AG04449 (cell line): ENCODE measurements at regions of chr4 and their contacts with region 1.

Region 1: DNA sequence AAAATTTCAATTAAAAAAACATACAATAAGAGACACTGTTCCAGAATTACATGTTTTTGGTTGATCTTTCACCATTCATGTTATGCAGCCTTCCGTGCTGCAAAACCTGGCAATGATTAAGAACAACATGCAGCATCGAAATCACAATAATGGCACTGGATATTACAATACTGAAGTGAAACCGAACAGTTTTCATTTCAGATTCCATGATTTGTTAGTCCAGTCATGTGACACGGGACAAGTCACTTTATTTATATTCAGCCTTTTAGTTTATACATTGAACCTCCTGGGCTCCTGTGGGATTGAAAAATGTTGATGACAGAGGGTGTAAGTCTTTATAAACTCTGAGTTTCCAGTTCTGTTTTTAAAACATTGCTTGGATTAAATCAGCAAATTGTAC is 142.5 kb upstream of the TTC29 start:
- DNase-seq: no peak
- H3K4me3 ChIP-seq: peak overlapping the region; percentile 15; the same call in 1 of the 2 replicates
- CTCF ChIP-seq: no peak

Region 2: DNA sequence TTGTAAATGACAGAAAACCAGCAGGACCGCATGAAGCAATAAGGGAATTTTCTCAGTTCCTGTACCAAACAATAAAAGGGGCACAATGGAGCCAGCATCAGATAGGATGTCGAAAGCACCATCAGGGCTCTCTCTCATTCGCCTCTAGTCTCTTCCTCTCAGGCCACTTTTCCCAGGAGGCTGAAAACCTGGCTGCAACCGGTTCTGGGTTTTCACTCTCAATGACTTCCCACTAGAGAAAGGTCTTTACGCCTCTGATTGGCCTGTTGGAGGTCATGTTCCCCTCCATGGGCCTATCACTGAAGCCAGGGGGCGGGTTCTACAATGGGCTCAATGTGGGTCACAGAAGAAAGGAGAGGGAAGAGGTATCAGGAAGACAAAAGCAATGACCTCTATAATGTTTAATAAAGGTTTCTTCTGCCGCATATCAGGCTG is 1178.8 kb before region 1 on chr4:
- CTCF ChIA-PET with region 1: no interaction called
- POLR2A ChIA-PET with region 1: no interaction called
- DNase-seq: no peak
- H3K4me3 ChIP-seq: no peak overlapping the region
- CTCF ChIP-seq: no peak

Region 3: DNA sequence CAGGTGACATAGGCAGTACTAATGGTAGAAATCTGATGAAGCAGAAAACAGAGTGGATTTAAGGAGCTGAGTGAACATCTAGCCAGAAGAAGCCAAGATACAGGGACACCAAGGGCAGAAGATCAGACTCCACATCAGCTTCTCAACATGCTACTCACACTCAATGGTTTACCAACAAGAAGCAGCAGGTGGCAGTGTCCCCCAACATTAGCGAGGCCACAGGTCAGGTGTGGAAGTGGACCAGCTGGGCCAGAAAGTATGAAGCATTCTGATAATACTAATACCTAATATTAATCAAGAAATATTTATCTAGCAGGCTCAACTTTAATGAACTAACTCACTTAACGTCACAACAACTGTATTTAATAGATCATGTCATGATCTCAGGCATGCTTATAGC is 69.1 kb before region 1 on chr4:
- CTCF ChIA-PET with region 1: interaction called, 36 read pairs
- POLR2A ChIA-PET with region 1: no interaction called
- DNase-seq: no peak
- H3K4me3 ChIP-seq: no peak overlapping the region
- CTCF ChIP-seq: peak; percentile 71

Region 4: GRCh38 chr4:147076179-147076578 is 12.0 kb before region 1 on chr4:
- CTCF ChIA-PET with region 1: no interaction called
- POLR2A ChIA-PET with region 1: no interaction called
- DNase-seq: no peak
- H3K4me3 ChIP-seq: no peak overlapping the region
- CTCF ChIP-seq: no peak

Region 5: GRCh38 chr4:147340111-147340510 is 252.0 kb after region 1 on chr4:
- CTCF ChIA-PET with region 1: no interaction called
- POLR2A ChIA-PET with region 1: no interaction called
- DNase-seq: no peak
- H3K4me3 ChIP-seq: no peak overlapping the region
- CTCF ChIP-seq: no peak